Left cardiac atrium (tissue), 4 donors: ENCODE measurements at regions of chr12 and their contacts with region 1.

Region 1: GRCh38 chr12:12786716-12787601 is 1.5 kb downstream of the APOLD1 start:
- DNase-seq: peak; percentile 84
- ATAC-seq: peak; percentile 94

Region 2: GRCh38 chr12:12467688-12468261 is 319.2 kb before region 1 on chr12:
- intact Hi-C with region 1: no loop called
- DNase-seq: no peak
- ATAC-seq: peak in 1 of 2 donors; percentile 84

Region 3: GRCh38 chr12:12611512-12612306 is 175.2 kb before region 1 on chr12 and contains the start of gene CREBL2:
- intact Hi-C with region 1: no loop called
- DNase-seq: peak; percentile 95
- ATAC-seq: peak; percentile 96 to 97
- total RNA-seq, gene CREBL2: 20.4 to 21.0 TPM

Region 4: GRCh38 chr12:12716793-12717585 is 70.0 kb before region 1 on chr12 and contains the start of gene CDKN1B:
- intact Hi-C with region 1: loop called (anchors 5 to 10 kb)
- DNase-seq: peak; percentile 91
- ATAC-seq: peak; percentile 94 to 95
- total RNA-seq, gene CDKN1B: 23.7 to 42.4 TPM

Region 5: GRCh38 chr12:12724661-12725545 is 62.1 kb before region 1 on chr12:
- intact Hi-C with region 1: loop called in 1 of 2 experiments (anchors 10 kb)
- DNase-seq: peak; percentile 94
- ATAC-seq: peak; percentile 83 to 87

Region 6: DNA sequence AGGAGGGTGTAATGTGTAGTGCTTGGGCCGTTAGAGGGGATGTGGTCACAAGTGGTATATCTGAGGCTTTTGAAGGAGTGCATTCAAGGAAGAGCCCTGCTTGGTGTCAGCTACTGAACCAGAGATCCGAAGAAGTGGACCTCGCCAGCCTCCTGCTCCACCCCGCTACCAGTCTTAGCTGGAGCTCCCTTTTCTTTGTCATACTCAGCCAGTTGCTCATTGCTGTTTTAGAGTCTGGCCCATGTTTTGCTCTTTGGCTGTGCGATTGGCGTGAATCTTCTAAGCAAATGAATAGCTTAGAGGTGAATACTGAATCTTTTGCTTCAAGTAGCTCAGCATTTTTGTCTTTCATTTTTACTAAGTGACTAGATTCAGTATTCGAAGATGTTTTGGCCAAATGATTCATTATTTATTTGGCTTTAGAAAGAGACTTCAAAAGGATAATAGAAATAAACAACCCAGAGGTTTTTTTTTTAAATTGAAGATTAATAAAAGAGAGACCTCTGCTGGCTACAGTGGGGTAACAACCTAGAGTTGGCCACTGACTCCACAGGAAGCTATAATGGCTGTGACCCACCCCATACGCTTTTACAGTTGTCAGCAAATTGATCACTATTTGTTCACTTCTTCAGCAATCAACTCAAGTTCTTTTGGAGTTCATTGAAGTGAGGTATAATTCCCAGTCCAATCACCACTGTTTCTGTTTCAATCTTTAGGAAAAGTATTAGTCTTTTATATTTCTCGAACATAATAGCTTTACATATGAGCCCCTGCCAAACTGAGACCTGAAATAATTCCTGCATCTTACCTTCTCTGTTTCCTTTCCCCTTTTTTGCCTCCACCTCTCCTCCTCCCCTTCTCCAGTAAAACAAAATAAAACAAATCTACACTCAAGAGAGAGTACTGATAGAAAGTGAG is 49.9 kb before region 1 on chr12:
- intact Hi-C with region 1: no loop called
- DNase-seq: no peak
- ATAC-seq: peak; percentile 71 to 85

Region 7: GRCh38 chr12:12946686-12947355 is 159.9 kb after region 1 on chr12:
- intact Hi-C with region 1: no loop called
- DNase-seq: no peak
- ATAC-seq: no peak